BJ (cell line): ENCODE measurements at regions of chr12 and their contacts with region 1.

Region 1: GRCh38 chr12:49232940-49233841 is 31.7 kb upstream of the TUBA1C start:
- DNase-seq: no peak
- H3K4me3 ChIP-seq: no peak overlapping the region
- H3K27me3 ChIP-seq: no peaks in the 10 kb centered on the region
- CTCF ChIP-seq: no peak

Region 2: GRCh38 chr12:49244176-49244575 is 11.0 kb after region 1 on chr12:
- CTCF ChIA-PET with region 1: interaction called, 48 read pairs
- POLR2A ChIA-PET with region 1: interaction called, 5 read pairs
- DNase-seq: peak; percentile 73
- H3K4me3 ChIP-seq: no peak overlapping the region
- H3K27me3 ChIP-seq: no peaks in the 10 kb centered on the region
- CTCF ChIP-seq: no peak